Endothelial cell of umbilical vein (primary cell): ENCODE measurements at regions of chr6 and their contacts with region 1.

Region 1: GRCh38 chr6:111011360-111012142 is 29.7 kb downstream of the RPF2 start:
- DNase-seq: peak; percentile 57
- H3K4me3 ChIP-seq: no peak overlapping the region
- H3K27ac ChIP-seq: no peak overlapping the region
- H3K4me1 ChIP-seq: no peaks in the 10 kb centered on the region
- H3K27me3 ChIP-seq: no peaks in the 10 kb centered on the region
- CTCF ChIP-seq: peak; percentile 43 to 45
- POLR2A ChIP-seq: no peak

Region 2: DNA sequence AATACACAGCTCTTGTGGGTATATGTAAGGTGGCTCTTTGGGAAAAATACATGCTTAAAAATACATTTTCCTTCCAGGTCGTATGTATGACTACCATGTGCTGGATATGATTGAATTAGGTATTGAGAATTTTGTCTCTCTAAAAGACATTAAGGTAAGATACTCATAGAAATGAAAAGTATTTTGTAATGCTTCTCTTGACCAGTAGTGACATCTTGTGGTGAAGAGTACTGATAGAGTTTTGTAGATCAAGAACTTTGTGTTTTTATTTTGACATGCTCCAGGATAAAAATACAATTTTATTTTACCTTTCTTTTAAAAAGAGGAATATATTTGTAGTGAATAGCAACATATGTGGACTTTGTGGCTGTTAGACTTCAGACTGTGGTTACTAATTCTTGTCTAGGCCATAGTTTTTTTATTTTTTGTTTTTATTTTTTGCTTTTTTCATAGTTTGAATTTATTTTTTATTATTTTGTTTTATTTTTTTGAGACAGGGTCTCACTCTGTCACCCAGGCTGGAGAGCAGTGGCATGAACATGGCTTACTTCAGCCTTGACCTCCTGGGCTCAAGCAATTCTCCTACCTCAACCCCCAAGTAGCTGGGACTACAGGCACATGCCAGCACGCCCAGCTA is 11.8 kb before region 1 on chr6:
- CTCF ChIA-PET with region 1: interaction called, 10 read pairs
- POLR2A ChIA-PET with region 1: no interaction called
- dilution Hi-C with region 1: no loop called
- intact Hi-C with region 1: no loop called
- DNase-seq: peak; percentile 59
- H3K4me3 ChIP-seq: no peak overlapping the region
- H3K27ac ChIP-seq: no peak overlapping the region
- H3K4me1 ChIP-seq: no peaks in the 10 kb centered on the region
- H3K27me3 ChIP-seq: no peaks in the 10 kb centered on the region
- CTCF ChIP-seq: peak in 1 of 2 donors; percentile 10
- POLR2A ChIP-seq: no peak

Region 3: DNA sequence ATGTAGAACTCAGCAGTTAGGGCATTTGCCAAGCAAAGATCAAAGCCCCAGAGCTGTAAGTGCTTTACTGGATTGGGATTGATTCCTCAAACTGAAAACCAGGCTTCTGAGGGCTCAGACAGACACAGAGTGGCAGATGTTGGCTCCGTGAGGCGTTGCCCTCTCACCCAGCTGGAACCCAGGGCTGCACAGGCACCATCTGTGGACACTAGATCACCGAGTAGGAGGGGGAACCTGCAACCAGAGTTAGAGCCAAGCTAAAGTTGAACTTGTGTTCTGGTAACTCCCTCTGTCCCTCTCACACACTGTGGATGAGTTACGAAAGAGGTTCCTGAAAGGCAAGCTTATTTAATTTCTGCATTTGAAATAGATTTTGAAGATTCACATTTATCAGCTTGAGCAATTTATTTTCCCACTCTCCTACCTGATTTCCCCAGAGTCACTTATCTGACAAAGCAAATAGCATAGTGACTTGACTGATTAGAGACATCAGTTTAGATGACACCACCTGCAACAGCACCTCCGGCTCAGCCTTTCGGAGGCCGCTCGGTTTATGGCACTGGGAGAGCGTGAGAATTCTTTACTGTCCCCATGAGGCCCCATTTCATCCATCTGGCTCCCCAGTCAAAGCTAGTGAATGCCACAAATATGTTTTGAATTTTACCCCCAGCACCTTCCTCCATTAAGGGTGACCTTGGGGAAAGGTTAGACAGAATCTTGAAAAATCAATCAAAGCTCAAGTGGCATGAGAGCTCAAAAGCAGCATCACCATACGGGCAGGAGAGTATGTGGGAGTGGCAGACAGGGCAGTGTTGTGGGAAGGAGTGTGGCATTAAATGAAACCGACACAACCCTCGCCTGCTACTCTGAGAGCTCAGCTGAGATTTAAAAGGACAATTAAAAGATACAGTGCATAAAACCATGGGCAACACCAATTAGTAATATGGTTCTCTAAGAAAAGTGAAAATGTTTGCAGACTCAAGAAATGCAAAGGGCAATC is 18.8 kb after region 1 on chr6:
- CTCF ChIA-PET with region 1: interaction called, 13 read pairs
- POLR2A ChIA-PET with region 1: no interaction called
- dilution Hi-C with region 1: no loop called
- intact Hi-C with region 1: no loop called
- DNase-seq: no peak
- H3K4me3 ChIP-seq: no peak overlapping the region
- H3K27ac ChIP-seq: no peak overlapping the region
- H3K4me1 ChIP-seq: no peaks in the 10 kb centered on the region
- H3K27me3 ChIP-seq: no peaks in the 10 kb centered on the region
- CTCF ChIP-seq: no peak
- POLR2A ChIP-seq: no peak